ENCODE measurements at regions of chr12 and their contacts with region 1.

Region 1: DNA sequence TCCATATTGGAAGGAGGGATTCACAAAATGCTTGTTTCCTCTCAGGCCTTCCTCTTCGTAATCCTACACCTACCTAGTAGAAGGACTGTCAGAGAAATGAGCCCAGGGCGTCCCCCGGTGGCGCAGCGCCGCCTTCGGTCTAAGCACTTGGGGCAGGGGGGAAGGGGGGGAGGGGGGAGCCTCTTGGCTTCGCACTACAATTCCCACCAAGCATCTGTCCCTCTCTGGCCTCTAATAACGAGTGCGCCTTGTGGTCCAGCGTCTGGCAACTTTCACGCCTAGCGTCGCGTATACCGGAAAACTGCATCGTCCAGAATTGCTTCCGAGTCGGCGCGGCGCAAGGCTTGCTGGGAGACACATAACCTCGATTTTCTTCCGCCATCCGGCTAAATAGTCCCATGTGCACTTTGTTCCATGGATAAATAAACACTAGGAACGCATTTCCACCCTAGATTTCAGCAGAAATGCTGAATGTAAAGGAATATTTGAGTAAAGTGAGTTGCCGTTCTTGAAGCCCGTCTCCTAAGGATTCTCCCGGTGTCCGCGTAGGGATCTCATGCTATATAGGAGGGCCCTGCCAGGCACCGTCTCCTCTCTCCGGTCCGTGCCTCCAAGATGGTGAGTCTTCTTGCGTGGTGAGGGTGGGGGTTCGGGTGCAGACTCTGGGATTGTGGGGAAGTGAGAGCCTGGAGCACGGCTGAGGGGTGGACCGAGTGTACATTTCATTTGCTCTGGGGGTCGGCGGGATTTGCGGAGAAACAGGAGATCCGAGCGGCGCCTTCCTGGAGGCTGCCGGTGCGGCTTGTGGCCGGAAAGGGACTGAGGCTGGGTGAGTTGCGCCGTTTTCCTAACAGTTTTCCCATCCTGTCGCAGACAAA is at the start of gene RPS26:
- DNase-seq: peak; percentile 89 to 99
- H3K4me3 ChIP-seq: peak within 1 kb of the TSS; percentile 73 to 95 (median 86)
- H3K27ac ChIP-seq: peak within 1 kb of the TSS; percentile 98
- H3K4me1 ChIP-seq: peaks cover 0 to 12% (median 4%) of the 10 kb centered on the region in 4 experiments; a peak in 5 of 7 replicates
- H3K27me3 ChIP-seq: no peaks in the 10 kb centered on the region
- CTCF ChIP-seq: peak; percentile 43 to 56 (median 55)
- EP300 ChIP-seq: no peak
- POLR2A ChIP-seq: peak; percentile 98 to 99
- RAD21 ChIP-seq: peak; percentile 63 to 69
- total RNA-seq, gene RPS26: 53.4 and 64.3 TPM in 2 replicates

Region 2: GRCh38 chr12:55670276-55670675 is 371.5 kb before region 1 on chr12:
- CTCF ChIA-PET with region 1: no interaction called
- POLR2A ChIA-PET with region 1: no interaction called
- DNase-seq: no peak
- H3K4me3 ChIP-seq: no peak overlapping the region
- H3K27ac ChIP-seq: no peak overlapping the region
- H3K4me1 ChIP-seq: no peaks in the 10 kb centered on the region
- H3K27me3 ChIP-seq: no peaks in the 10 kb centered on the region; a peak in 1 of 7 replicates
- CTCF ChIP-seq: no peak
- EP300 ChIP-seq: no peak
- POLR2A ChIP-seq: no peak
- RAD21 ChIP-seq: no peak

Region 3: DNA sequence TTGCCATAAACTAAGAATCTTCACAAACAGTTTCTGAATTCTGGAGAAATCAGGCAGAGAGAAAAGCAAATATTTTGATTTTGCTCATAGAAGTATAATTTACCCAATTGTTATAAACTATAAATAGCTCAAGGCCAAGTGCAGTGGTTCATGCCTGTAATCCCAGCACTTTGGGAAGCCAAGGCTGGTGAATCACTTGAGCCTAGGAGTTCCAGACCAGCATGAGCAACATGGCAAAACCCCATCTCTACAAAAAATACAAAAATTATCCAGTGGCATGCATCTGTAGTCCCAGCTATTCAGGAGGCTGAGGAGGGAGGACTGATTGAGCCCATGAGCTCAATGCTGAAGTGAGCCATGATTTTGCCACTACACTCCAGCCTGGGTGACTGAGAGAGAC is 179.5 kb before region 1 on chr12:
- CTCF ChIA-PET with region 1: no interaction called
- POLR2A ChIA-PET with region 1: no interaction called
- DNase-seq: no peak
- H3K4me3 ChIP-seq: no peak overlapping the region
- H3K27ac ChIP-seq: no peak overlapping the region
- H3K4me1 ChIP-seq: no peaks in the 10 kb centered on the region
- H3K27me3 ChIP-seq: no peaks in the 10 kb centered on the region
- CTCF ChIP-seq: no peak
- EP300 ChIP-seq: no peak
- POLR2A ChIP-seq: no peak
- RAD21 ChIP-seq: no peak

Region 4: GRCh38 chr12:55874443-55874842 is 167.3 kb before region 1 on chr12:
- CTCF ChIA-PET with region 1: no interaction called
- POLR2A ChIA-PET with region 1: no interaction called
- DNase-seq: no peak
- H3K4me3 ChIP-seq: no peak overlapping the region
- H3K27ac ChIP-seq: no peak overlapping the region
- H3K4me1 ChIP-seq: peaks cover 0 to 4% (median 3%) of the 10 kb centered on the region in 4 experiments; a peak in 4 of 7 replicates
- H3K27me3 ChIP-seq: no peaks in the 10 kb centered on the region
- CTCF ChIP-seq: no peak
- EP300 ChIP-seq: no peak
- POLR2A ChIP-seq: no peak
- RAD21 ChIP-seq: no peak

Region 5: GRCh38 chr12:55926738-55927587 is 114.8 kb before region 1 on chr12:
- CTCF ChIA-PET with region 1: interaction called, 6 read pairs
- POLR2A ChIA-PET with region 1: interaction called, 14 read pairs
- DNase-seq: peak; percentile 84 to 94
- H3K4me3 ChIP-seq: peak overlapping the region; percentile 90 to 100 (median 94)
- H3K27ac ChIP-seq: peak overlapping the region; percentile 84
- H3K4me1 ChIP-seq: peaks cover 8 to 19% (median 11%) of the 10 kb centered on the region in 4 experiments; a peak in 6 of 7 replicates
- H3K27me3 ChIP-seq: peaks cover 0 to 6% (median 1%) of the 10 kb centered on the region in 4 experiments; a peak in 2 of 7 replicates
- CTCF ChIP-seq: peak; percentile 51 to 66 (median 59)
- EP300 ChIP-seq: no peak
- POLR2A ChIP-seq: peak in 1 of 2 experiments; percentile 39; a peak in 2 of 3 replicates
- RAD21 ChIP-seq: peak; percentile 23 to 35; a peak in 3 of 4 replicates

Region 6: DNA sequence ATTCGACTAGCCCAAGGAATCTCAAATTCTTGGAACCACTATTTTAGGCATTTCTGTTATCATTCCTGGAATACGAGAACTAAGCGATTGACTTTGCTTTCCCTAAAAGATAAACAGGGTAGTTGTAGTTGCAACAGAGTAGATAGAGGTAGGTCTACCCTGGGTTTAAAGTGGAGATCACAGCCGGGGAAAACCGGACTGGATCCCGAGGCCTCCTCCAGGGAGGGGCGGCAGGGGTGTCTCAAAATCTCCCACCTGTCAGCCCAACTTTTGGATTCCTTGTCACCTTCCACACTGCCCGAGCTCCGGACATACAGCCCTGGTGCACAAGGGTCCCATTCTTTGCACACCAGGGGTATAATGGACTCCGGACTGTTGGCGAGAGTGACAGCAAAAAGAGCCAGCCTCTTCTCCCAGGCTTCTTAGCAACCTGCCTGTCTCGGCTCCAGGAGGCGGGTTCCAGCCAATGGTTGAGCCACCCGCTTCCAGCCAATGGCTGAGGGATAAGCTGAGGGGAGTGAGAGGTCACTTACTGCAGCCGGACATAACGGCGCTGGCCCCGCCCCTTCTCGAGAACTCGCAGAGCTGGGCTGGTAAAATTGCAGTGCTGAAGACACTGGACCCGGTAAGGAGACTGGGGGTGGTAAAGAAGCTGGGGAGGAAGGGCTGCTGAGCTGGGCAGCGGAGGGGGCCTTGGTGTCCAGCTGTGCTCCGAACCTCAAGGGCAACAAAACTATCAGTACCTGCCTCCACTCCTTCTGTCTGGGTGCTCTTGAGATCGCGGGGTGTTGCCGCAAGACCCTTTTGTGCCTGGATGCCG is 44.9 kb before region 1 on chr12 and contains the start of gene SUOX:
- CTCF ChIA-PET with region 1: interaction called, 54 read pairs
- POLR2A ChIA-PET with region 1: interaction called, 35 read pairs
- DNase-seq: peak; percentile 90 to 94
- H3K4me3 ChIP-seq: peak within 1 kb of the TSS; percentile 77 to 97 (median 89)
- H3K27ac ChIP-seq: peak within 1 kb of the TSS; percentile 72
- H3K4me1 ChIP-seq: peaks cover 0 to 4% (median 0%) of the 10 kb centered on the region in 4 experiments; a peak in 2 of 7 replicates
- H3K27me3 ChIP-seq: no peaks in the 10 kb centered on the region
- CTCF ChIP-seq: no peak
- EP300 ChIP-seq: no peak
- POLR2A ChIP-seq: peak in 1 of 2 experiments; percentile 80; a peak in 2 of 3 replicates
- RAD21 ChIP-seq: no peak
- total RNA-seq, gene SUOX: 22.5 and 23.1 TPM in 2 replicates

Region 7: GRCh38 chr12:56020423-56021184 is 21.2 kb before region 1 on chr12 and contains the start of gene IKZF4:
- CTCF ChIA-PET with region 1: interaction called, 5 read pairs
- POLR2A ChIA-PET with region 1: interaction called, 48 read pairs
- DNase-seq: peak in 1 of 2 experiments; percentile 81
- H3K4me3 ChIP-seq: peak within 1 kb of the TSS; percentile 37 to 60 (median 52)
- H3K27ac ChIP-seq: peak within 1 kb of the TSS; percentile 73
- H3K4me1 ChIP-seq: peaks cover 8 to 25% (median 16%) of the 10 kb centered on the region in 4 experiments
- H3K27me3 ChIP-seq: no peaks in the 10 kb centered on the region
- CTCF ChIP-seq: no peak
- EP300 ChIP-seq: no peak
- POLR2A ChIP-seq: peak in 1 of 2 experiments; percentile 69; a peak in 2 of 3 replicates
- RAD21 ChIP-seq: no peak
- total RNA-seq, gene IKZF4: 12.5 and 13.3 TPM in 2 replicates

Region 8: DNA sequence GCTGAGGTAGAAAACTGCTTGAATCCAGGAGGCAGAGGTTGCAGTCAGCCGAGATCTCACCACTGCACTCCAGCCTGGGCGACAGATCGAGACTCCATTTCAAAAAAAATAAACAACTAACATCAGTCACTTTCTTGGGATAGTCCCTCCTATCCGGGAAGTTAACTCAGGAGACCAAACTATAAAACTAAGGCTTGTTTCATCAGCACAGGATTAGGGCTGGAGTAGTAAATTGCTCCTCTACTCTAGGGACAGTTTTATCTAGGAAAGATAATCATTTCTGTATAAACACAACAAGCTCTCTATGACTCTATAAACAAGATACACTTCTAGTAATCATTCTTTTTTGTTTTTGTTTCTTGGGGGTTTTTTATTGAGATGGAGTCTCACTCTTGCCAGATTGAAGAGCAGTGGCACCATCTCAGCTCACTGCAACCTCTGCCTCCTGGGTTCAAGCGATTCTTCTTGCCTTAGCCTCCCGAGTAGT is 11.7 kb after region 1 on chr12:
- CTCF ChIA-PET with region 1: interaction called, 7 read pairs
- POLR2A ChIA-PET with region 1: interaction called, 40 read pairs
- DNase-seq: no peak
- H3K4me3 ChIP-seq: no peak overlapping the region
- H3K27ac ChIP-seq: no peak overlapping the region
- H3K4me1 ChIP-seq: no peaks in the 10 kb centered on the region
- H3K27me3 ChIP-seq: no peaks in the 10 kb centered on the region
- CTCF ChIP-seq: no peak
- EP300 ChIP-seq: no peak
- POLR2A ChIP-seq: no peak
- RAD21 ChIP-seq: no peak

Region 9: GRCh38 chr12:56078990-56079664 is 37.3 kb after region 1 on chr12:
- CTCF ChIA-PET with region 1: interaction called, 8 read pairs
- POLR2A ChIA-PET with region 1: interaction called, 73 read pairs
- DNase-seq: peak; percentile 82 to 98
- H3K4me3 ChIP-seq: peak overlapping the region; percentile 74 to 89 (median 80)
- H3K27ac ChIP-seq: peak overlapping the region; percentile 92
- H3K4me1 ChIP-seq: peaks cover 3 to 17% (median 11%) of the 10 kb centered on the region in 4 experiments
- H3K27me3 ChIP-seq: no peaks in the 10 kb centered on the region
- CTCF ChIP-seq: peak; percentile 73 to 81 (median 78)
- EP300 ChIP-seq: 0 out of 3 replicates have a peak, but pooled peaks of 1 of the 2 experiments have one; percentile 38
- POLR2A ChIP-seq: peak in 1 of 2 experiments; percentile 84; a peak in 2 of 3 replicates
- RAD21 ChIP-seq: peak; percentile 35 to 51; a peak in 3 of 4 replicates

Region 10: DNA sequence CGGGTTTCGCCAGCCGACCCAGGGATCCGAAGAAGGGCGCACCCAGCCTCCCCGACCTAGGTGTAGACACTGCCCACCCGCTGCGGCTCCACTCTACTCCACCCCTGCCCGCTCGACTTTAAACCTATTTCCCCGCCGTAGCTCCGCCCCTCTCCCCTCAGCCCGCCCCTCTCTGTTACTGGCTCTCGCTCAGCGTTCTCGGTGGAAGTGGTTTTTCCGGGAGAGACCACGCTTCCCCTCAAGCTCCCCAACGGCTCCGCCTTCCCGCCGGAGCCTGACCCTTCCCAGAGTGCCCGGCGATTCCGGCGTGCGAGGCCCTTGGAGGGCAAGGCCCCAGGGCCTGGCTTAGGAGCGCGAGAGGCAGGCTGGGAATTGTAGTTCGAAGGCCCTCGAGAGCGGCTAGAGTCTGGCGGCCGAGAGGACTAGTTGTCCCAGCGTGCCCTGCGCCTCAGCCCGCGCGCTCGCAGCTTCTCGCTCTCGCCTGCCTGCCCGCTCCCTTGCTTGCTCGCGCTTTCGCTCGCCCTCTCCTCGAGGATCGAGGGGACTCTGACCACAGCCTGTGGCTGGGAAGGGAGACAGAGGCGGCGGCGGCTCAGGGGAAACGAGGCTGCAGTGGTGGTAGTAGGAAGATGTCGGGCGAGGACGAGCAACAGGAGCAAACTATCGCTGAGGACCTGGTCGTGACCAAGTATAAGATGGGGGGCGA is 62.5 kb after region 1 on chr12 and contains the start of gene PA2G4:
- CTCF ChIA-PET with region 1: interaction called, 13 read pairs
- POLR2A ChIA-PET with region 1: interaction called, 35 read pairs
- DNase-seq: peak; percentile 95 to 99
- H3K4me3 ChIP-seq: peak within 1 kb of the TSS; percentile 81 to 95 (median 92)
- H3K27ac ChIP-seq: peak within 1 kb of the TSS; percentile 88; the same call in 1 of the 2 replicates
- H3K4me1 ChIP-seq: peaks cover 0 to 9% (median 3%) of the 10 kb centered on the region in 4 experiments; a peak in 5 of 7 replicates
- H3K27me3 ChIP-seq: no peaks in the 10 kb centered on the region
- CTCF ChIP-seq: no peak
- EP300 ChIP-seq: no peak
- POLR2A ChIP-seq: peak; percentile 69 to 70; a peak in 2 of 3 replicates
- RAD21 ChIP-seq: no peak
- total RNA-seq, gene PA2G4: 237 and 242 TPM in 2 replicates